PC-9 (cell line): ENCODE measurements at regions of chr15 and their contacts with region 1.

Region 1: GRCh38 chr15:74646480-74646879 is 30.8 kb downstream of the CLK3 start:
- DNase-seq: no peak
- H3K4me3 ChIP-seq: no peak overlapping the region
- H3K27ac ChIP-seq: no peak overlapping the region
- H3K4me1 ChIP-seq: peaks cover 23% of the 10 kb centered on the region
- H3K27me3 ChIP-seq: no peaks in the 10 kb centered on the region
- CTCF ChIP-seq: no peak

Region 2: GRCh38 chr15:74407055-74407691 is 239.3 kb before region 1 on chr15:
- CTCF ChIA-PET with region 1: interaction called, 11 read pairs
- POLR2A ChIA-PET with region 1: no interaction called
- intact Hi-C with region 1: no loop called
- DNase-seq: peak; percentile 75 to 82
- H3K4me3 ChIP-seq: no peak overlapping the region; the same call in 1 of the 2 replicates
- H3K27ac ChIP-seq: peak overlapping the region; percentile 26; the same call in 1 of the 2 replicates
- H3K4me1 ChIP-seq: peaks cover 17% of the 10 kb centered on the region
- H3K27me3 ChIP-seq: no peaks in the 10 kb centered on the region
- CTCF ChIP-seq: no peak

Region 3: DNA sequence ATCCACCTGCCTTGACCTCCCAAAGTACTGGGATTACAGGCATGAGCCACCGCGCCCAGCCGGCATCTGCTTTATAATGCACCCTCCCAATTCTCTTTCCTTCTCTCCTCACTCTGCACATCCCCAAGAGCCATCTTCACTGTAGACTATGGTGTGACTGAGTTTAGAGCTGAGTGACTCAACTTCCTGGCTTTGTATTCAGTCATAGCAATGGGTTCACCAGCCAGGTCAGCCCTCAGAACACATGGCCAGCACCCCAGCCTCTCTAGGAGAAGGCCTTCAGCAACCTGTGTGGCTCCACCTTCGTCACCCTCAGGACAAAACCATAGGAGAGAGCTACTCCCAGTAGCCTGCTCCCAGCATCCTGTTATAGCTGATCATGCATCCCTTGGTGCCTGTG is 72.5 kb before region 1 on chr15:
- CTCF ChIA-PET with region 1: no interaction called
- POLR2A ChIA-PET with region 1: no interaction called
- intact Hi-C with region 1: no loop called
- DNase-seq: no peak
- H3K4me3 ChIP-seq: no peak overlapping the region
- H3K27ac ChIP-seq: no peak overlapping the region
- H3K4me1 ChIP-seq: no peaks in the 10 kb centered on the region
- H3K27me3 ChIP-seq: no peaks in the 10 kb centered on the region
- CTCF ChIP-seq: no peak

Region 4: GRCh38 chr15:74680456-74680855 is 34.0 kb after region 1 on chr15:
- CTCF ChIA-PET with region 1: no interaction called
- POLR2A ChIA-PET with region 1: no interaction called
- intact Hi-C with region 1: no loop called
- DNase-seq: no peak
- H3K4me3 ChIP-seq: no peak overlapping the region
- H3K27ac ChIP-seq: no peak overlapping the region
- H3K4me1 ChIP-seq: no peaks in the 10 kb centered on the region
- H3K27me3 ChIP-seq: no peaks in the 10 kb centered on the region
- CTCF ChIP-seq: no peak